ENCODE measurements at regions of chr5 and their contacts with region 1.

Region 1: GRCh38 chr5:170623576-170624181 is 119.9 kb downstream of the KCNIP1 start:
- DNase-seq: peak; percentile 48
- ATAC-seq: peak; percentile 96
- H3K4me3 ChIP-seq: no peak overlapping the region
- H3K27ac ChIP-seq: no peak overlapping the region
- H3K4me1 ChIP-seq: no peaks in the 10 kb centered on the region
- H3K27me3 ChIP-seq: peaks cover 14% of the 10 kb centered on the region; the same call in 1 of the 2 replicates
- CTCF ChIP-seq: peak; percentile 79 to 83 (median 81)
- POLR2A ChIP-seq: no peak
- RAD21 ChIP-seq: peak; percentile 90

Region 2: GRCh38 chr5:170434966-170435605 is 188.6 kb before region 1 on chr5:
- CTCF ChIA-PET with region 1: interaction called, 10 read pairs
- POLR2A ChIA-PET with region 1: no interaction called
- RAD21 ChIA-PET with region 1: interaction called in 1 of 2 experiments, 4 read pairs
- intact Hi-C with region 1: loop called (anchors 1 kb)
- DNase-seq: peak; percentile 32
- ATAC-seq: peak; percentile 91
- H3K4me3 ChIP-seq: no peak overlapping the region
- H3K27ac ChIP-seq: no peak overlapping the region
- H3K4me1 ChIP-seq: no peaks in the 10 kb centered on the region
- H3K27me3 ChIP-seq: peaks cover 14% of the 10 kb centered on the region
- CTCF ChIP-seq: peak; percentile 87 to 97 (median 95)
- POLR2A ChIP-seq: no peak
- RAD21 ChIP-seq: peak; percentile 92

Region 3: DNA sequence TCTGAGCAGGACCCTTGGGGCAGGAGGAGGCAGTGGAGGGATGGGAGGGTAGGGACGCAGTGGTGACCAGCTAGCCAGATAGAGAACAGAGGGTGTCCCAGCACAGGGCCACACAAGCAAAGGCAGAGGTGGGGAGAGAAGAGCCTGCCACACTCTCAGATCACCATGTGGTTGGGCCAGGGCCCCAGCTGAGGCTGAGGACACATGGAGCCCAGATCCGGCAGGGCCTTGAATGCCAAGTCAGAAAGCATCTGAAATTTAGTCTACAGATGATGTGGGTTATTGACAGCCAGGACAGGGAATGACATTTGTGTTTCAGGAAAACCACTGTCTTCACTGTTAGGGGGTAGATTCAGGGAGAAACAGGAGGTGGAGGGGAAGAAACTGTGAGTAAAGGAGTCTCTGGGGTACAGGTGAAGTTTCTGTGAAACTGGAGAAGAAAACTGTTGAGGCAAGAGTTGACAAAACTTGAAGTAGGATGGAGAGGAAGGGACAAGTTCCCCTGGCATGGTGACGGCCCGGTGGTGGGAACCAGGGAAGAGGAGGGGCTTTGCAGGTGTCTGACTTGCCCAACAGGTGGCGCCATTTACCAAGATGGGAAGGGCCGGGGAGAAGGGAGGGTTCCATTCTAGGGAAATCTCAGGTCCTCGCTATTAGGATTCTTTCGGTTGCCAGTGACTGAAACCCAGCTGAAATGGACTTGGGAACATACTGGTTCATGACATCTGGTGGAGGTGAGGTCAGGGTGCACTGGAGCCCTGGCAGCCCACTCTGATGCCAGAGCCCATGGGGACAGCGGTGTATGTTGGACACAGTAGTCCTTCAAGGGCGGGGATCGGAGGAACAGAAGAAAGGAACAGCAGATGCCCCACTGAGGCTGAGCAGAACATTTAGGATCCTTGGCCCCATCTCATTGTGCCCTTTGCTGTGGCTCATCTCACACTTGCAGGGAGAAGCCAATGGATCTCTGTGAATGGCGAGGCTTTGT is 19.8 kb before region 1 on chr5:
- CTCF ChIA-PET with region 1: interaction called, 3 read pairs
- POLR2A ChIA-PET with region 1: no interaction called
- RAD21 ChIA-PET with region 1: no interaction called
- intact Hi-C with region 1: loop called (anchors 1 kb)
- DNase-seq: peak; percentile 22
- ATAC-seq: peak; percentile 99
- H3K4me3 ChIP-seq: no peak overlapping the region
- H3K27ac ChIP-seq: no peak overlapping the region
- H3K4me1 ChIP-seq: no peaks in the 10 kb centered on the region
- H3K27me3 ChIP-seq: peaks cover 11% of the 10 kb centered on the region
- CTCF ChIP-seq: peak; percentile 84 to 89 (median 86)
- POLR2A ChIP-seq: no peak
- RAD21 ChIP-seq: peak; percentile 88

Region 4: DNA sequence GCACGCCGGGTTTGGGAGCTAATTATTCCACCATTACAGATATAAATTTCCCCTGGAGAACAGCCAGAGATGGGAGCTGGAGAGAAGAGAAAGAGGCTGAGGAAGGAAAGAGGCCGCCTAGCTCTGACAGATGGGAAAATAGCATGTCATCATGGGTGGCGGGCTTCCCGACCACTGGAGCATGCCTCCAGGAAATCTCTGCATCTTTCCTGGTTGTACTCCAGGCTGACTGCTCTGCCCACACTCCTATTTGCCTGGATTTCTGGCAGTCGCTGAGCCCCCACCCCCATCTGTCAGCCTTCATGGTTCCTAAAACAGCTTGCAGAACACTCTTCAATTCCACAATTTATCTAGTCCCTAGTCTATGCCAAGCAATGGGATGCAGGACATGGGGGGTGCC is 145.6 kb after region 1 on chr5:
- CTCF ChIA-PET with region 1: no interaction called
- POLR2A ChIA-PET with region 1: no interaction called
- RAD21 ChIA-PET with region 1: no interaction called
- intact Hi-C with region 1: no loop called
- DNase-seq: no peak
- ATAC-seq: no peak
- H3K4me3 ChIP-seq: no peak overlapping the region
- H3K27ac ChIP-seq: no peak overlapping the region
- H3K4me1 ChIP-seq: no peaks in the 10 kb centered on the region
- H3K27me3 ChIP-seq: no peaks in the 10 kb centered on the region
- CTCF ChIP-seq: no peak
- POLR2A ChIP-seq: no peak
- RAD21 ChIP-seq: no peak